GM12878 (cell line): ENCODE measurements at regions of chr6 and their contacts with region 1.

Region 1: GRCh38 chr6:33288921-33289748 is at the starts of genes PFDN6 and WDR46:
- DNase-seq: peak; percentile 89
- ATAC-seq: peak; percentile 99
- H3K4me3 ChIP-seq: peak within 1 kb of the TSS; percentile 78
- H3K27ac ChIP-seq: peak within 1 kb of the TSS; percentile 74
- H3K4me1 ChIP-seq: no peaks in the 10 kb centered on the region
- H3K27me3 ChIP-seq: no peaks in the 10 kb centered on the region
- CTCF ChIP-seq: no peak
- EP300 ChIP-seq: no peak
- POLR2A ChIP-seq: peak; percentile 65
- RAD21 ChIP-seq: no peak
- polyA plus RNA-seq, gene PFDN6: 3.1 to 5.7 TPM
- polyA plus RNA-seq, gene WDR46: 10.1 to 23.5 TPM

Region 2: DNA sequence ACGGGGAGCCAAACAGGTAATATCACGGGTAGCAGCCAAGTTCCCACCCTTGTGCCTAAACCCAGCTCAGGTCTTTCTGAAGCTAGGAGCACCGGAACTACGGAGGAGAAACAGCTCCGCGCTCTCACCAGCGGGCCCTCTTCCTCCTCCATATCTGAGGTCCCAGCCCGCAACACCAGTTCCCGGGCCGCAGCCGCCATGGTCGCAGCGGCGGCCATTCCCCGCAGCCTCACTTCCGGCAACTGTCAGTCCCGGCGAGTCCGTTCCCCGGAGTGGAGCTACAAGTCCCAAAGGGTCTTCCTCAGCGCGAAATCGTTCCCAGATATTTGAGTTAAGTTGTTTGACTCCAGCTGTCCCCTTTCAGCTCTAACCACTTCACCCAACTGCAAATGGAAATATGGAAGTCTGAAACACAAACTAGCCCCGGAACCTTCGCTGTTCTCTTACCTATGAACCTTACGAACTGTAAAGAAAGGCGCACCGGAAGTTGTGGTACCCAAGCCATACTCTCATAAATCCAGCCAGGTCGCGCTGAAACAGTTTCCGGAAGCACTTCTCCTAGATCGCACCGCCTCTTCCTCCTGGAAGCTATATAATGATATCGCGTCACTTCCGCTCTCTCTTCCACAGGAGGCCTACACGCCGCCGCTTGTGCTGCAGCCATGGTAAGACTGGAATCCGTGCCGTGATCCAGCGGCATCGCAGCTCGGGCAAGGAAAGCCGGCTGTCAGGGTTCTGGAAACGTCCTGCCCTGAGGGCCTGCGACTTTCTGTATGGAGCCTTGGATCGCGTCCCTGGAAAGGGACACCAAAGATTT is 17.5 kb before region 1 on chr6 and contains the starts of genes RPS18 and VPS52:
- CTCF ChIA-PET with region 1: interaction called, 28 read pairs
- POLR2A ChIA-PET with region 1: interaction called, 60 read pairs
- RAD21 ChIA-PET with region 1: interaction called, 9 read pairs
- SMC1A ChIA-PET with region 1: interaction called, 25 read pairs
- in situ Hi-C with region 1: no loop called
- intact Hi-C with region 1: no loop called
- DNase-seq: peak; percentile 96
- ATAC-seq: peak; percentile 87
- H3K4me3 ChIP-seq: peak within 1 kb of the TSS; percentile 88
- H3K27ac ChIP-seq: peak within 1 kb of the TSS; percentile 97
- H3K4me1 ChIP-seq: peaks cover 18% of the 10 kb centered on the region
- H3K27me3 ChIP-seq: no peaks in the 10 kb centered on the region
- CTCF ChIP-seq: no peak
- EP300 ChIP-seq: peak in 1 of 2 experiments; percentile 52; a peak in 2 of 4 replicates
- POLR2A ChIP-seq: peak; percentile 100
- RAD21 ChIP-seq: no peak
- polyA plus RNA-seq, gene RPS18: 17,270 to 20,828 TPM
- polyA plus RNA-seq, gene VPS52: 11.3 to 13.2 TPM

Region 3: GRCh38 chr6:33276864-33277662 is 12.1 kb before region 1 on chr6 and contains the start of gene B3GALT4:
- CTCF ChIA-PET with region 1: interaction called, 28 read pairs
- POLR2A ChIA-PET with region 1: interaction called, 60 read pairs
- RAD21 ChIA-PET with region 1: interaction called, 12 read pairs
- SMC1A ChIA-PET with region 1: interaction called, 25 read pairs
- in situ Hi-C with region 1: no loop called
- intact Hi-C with region 1: loop called (anchors 1 kb)
- DNase-seq: peak; percentile 49
- ATAC-seq: peak; percentile 75
- H3K4me3 ChIP-seq: peak within 1 kb of the TSS; percentile 87
- H3K27ac ChIP-seq: peak within 1 kb of the TSS; percentile 86
- H3K4me1 ChIP-seq: peaks cover 22% of the 10 kb centered on the region
- H3K27me3 ChIP-seq: no peaks in the 10 kb centered on the region
- CTCF ChIP-seq: peak; percentile 34 to 60 (median 47); a peak in 4 of 6 replicates
- EP300 ChIP-seq: 0 out of 4 replicates have a peak, but pooled peaks of 1 of the 2 experiments have one; percentile 9
- POLR2A ChIP-seq: peak; percentile 92
- RAD21 ChIP-seq: no peak
- polyA plus RNA-seq, gene B3GALT4: 0.27 to 0.37 TPM

Region 4: GRCh38 chr6:33299237-33299944 is 10.3 kb after region 1 on chr6:
- CTCF ChIA-PET with region 1: interaction called, 4 read pairs
- POLR2A ChIA-PET with region 1: interaction called, 24 read pairs
- RAD21 ChIA-PET with region 1: interaction called, 11 read pairs
- SMC1A ChIA-PET with region 1: interaction called, 7 read pairs
- in situ Hi-C with region 1: no loop called
- intact Hi-C with region 1: loop called (anchors 1 kb)
- DNase-seq: peak; percentile 69
- ATAC-seq: peak; percentile 89
- H3K4me3 ChIP-seq: peak overlapping the region; percentile 100
- H3K27ac ChIP-seq: peak overlapping the region; percentile 86
- H3K4me1 ChIP-seq: peaks cover 11% of the 10 kb centered on the region
- H3K27me3 ChIP-seq: no peaks in the 10 kb centered on the region
- CTCF ChIP-seq: peak; percentile 58 to 72 (median 69)
- EP300 ChIP-seq: peak in 1 of 2 experiments; percentile 47; a peak in 1 of 4 replicates
- POLR2A ChIP-seq: peak; percentile 94
- RAD21 ChIP-seq: no peak

Region 5: DNA sequence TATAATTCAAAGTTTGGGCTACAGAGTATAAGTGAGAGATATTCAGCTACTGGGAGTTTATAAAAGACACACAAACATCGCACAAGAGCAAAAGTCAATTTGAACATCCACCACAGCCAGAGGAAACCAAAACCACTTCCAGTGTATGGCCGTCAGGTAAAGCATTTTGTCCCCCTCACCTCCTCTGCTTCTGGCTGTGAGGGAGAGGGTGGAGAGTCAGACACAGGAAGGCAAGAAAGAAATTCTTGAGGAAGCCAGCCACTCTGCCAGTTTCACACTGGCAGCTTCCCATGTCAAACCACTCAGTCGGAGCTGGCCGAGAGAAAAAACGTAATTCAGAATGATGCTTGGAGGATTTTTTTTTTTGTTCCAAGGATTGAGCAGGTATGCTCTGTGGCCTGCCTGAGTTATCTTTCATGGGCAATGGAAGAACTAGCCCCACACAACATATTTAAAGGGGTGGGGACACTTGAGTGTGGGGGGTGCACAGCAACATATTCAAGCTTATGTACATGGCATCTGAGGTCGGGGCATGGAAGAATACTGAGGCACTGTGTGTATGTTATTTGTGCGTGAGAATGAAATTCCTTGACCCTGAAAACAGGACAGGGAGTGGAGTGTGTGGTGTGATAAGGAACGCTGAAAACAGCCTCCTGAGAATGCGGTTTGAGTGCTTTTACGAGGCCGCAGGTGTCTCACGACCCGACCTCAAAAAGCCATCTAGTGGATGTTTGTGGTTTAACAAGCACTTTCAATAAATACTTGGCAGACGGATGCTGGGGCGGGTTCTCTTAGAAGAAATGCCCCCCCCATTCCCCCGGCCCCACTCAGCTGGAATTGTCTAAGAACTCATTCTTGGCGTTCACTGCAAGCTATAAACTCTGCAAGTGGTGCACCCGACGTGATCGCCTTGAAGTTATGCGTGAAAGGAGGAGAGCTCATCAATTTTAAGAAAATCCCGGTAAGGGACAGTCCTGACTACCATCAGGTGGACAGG is 55.9 kb after region 1 on chr6:
- CTCF ChIA-PET with region 1: interaction called, 8 read pairs
- POLR2A ChIA-PET with region 1: no interaction called
- RAD21 ChIA-PET with region 1: interaction called, 11 read pairs
- SMC1A ChIA-PET with region 1: no interaction called
- in situ Hi-C with region 1: no loop called
- intact Hi-C with region 1: no loop called
- DNase-seq: peak; percentile 58
- ATAC-seq: peak; percentile 81
- H3K4me3 ChIP-seq: peak overlapping the region; percentile 46; the same call in 1 of the 2 replicates
- H3K27ac ChIP-seq: peak overlapping the region; percentile 41
- H3K4me1 ChIP-seq: peaks cover 15% of the 10 kb centered on the region
- H3K27me3 ChIP-seq: no peaks in the 10 kb centered on the region
- CTCF ChIP-seq: peak; percentile 48 to 60 (median 55); a peak in 5 of 6 replicates
- EP300 ChIP-seq: no peak
- POLR2A ChIP-seq: no peak
- RAD21 ChIP-seq: peak; percentile 63

Region 6: DNA sequence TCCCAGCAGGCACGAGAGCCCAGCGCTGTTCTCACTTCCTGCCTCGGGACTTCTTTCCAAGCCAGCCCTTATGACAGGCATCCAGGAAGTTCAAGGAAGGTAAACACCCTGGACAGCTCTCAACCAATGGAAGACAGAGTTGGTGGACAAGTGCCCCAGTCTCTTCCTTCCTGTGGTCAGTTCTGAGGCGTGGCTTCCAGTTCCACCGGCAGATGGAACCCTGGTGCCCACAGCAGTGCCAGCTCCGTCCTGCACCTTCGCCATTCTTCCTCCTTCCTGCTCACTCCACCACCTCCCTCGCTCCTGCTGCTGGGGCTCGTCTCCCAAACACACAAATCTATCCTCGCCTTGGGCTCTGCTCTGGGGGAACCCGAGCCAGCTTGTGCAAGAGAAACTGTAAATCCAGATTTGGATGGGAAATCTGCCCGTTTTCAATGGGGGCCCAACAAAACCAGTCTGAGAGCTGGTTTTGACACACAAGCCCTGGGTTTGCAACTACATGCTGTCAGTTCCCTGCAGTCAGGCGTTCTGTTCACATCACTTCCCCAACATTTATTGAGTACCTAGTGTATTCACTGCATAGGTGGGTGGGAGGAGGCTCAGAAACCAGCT is 694.1 kb after region 1 on chr6:
- CTCF ChIA-PET with region 1: no interaction called
- POLR2A ChIA-PET with region 1: no interaction called
- RAD21 ChIA-PET with region 1: no interaction called
- SMC1A ChIA-PET with region 1: no interaction called
- in situ Hi-C with region 1: no loop called
- intact Hi-C with region 1: no loop called
- DNase-seq: no peak
- ATAC-seq: no peak
- H3K4me3 ChIP-seq: no peak overlapping the region
- H3K27ac ChIP-seq: no peak overlapping the region
- H3K4me1 ChIP-seq: no peaks in the 10 kb centered on the region
- H3K27me3 ChIP-seq: peaks cover 0 to 1% of the 10 kb centered on the region in 2 experiments; a peak in 2 of 4 replicates
- CTCF ChIP-seq: no peak
- EP300 ChIP-seq: no peak
- POLR2A ChIP-seq: no peak
- RAD21 ChIP-seq: no peak